Endothelial cell of umbilical vein (primary cell): ENCODE measurements at regions of chr2 and their contacts with region 1.

Region 1: DNA sequence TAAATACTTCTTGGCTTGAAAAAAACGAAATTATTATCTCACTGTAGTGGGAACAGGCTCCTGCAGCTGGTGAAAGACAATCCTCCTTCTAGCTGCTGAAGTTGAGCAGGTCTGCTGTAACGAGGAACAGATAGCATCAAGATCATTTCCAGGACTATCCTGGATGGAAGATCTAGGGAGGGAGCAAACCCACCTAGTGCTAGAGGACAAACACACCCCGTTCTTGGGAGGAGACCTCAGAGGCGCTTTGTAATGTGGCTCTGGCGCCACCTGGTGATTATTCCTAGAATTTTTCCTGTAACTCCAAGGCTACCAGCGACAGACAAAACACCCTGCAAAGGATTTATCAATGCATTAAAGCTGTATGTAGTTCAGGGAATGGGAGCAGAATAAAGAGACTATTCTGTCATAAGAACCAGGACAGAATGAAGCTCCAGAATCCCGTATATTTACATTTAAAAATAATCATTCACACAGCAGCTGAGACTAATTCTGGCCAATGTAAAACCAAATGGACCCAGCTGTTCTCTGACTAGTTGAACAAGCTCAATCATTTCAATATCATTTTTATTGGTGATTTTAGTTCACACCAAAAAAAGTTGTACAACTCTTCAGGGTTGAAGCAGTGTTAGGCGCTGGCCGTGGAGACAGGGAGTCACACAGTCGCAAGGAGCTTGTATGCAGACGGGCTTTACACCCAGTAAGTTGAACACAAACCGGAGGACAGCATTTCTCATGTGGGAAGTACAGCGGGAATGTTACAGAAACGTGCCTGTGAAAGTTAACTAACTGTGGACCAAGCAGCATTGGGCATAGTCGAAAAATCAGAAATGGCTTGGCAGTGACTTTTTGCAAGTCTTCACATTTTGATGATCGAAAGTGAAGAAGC is 290.3 kb downstream of the TRIB2 start:
- DNase-seq: peak; percentile 83
- H3K4me3 ChIP-seq: no peak overlapping the region
- H3K27ac ChIP-seq: no peak overlapping the region
- H3K4me1 ChIP-seq: peaks cover 19% of the 10 kb centered on the region
- H3K27me3 ChIP-seq: peaks cover 0 to 3% of the 10 kb centered on the region in 2 experiments
- CTCF ChIP-seq: peak; percentile 63 to 71
- POLR2A ChIP-seq: no peak

Region 2: GRCh38 chr2:11863513-11864328 is 1143.4 kb before region 1 on chr2:
- CTCF ChIA-PET with region 1: interaction called, 51 read pairs
- POLR2A ChIA-PET with region 1: interaction called, 4 read pairs
- dilution Hi-C with region 1: no loop called
- intact Hi-C with region 1: loop called (anchors 1 kb)
- DNase-seq: peak; percentile 88
- H3K4me3 ChIP-seq: no peak overlapping the region
- H3K27ac ChIP-seq: no peak overlapping the region
- H3K4me1 ChIP-seq: peaks cover 7% of the 10 kb centered on the region
- H3K27me3 ChIP-seq: peaks cover 3 to 11% of the 10 kb centered on the region in 2 experiments
- CTCF ChIP-seq: peak; percentile 80 to 93
- POLR2A ChIP-seq: no peak

Region 3: GRCh38 chr2:12416600-12416999 is 590.5 kb before region 1 on chr2:
- CTCF ChIA-PET with region 1: interaction called, 14 read pairs
- POLR2A ChIA-PET with region 1: no interaction called
- dilution Hi-C with region 1: no loop called
- intact Hi-C with region 1: loop called (anchors 1 kb)
- DNase-seq: peak; percentile 57
- H3K4me3 ChIP-seq: no peak overlapping the region
- H3K27ac ChIP-seq: no peak overlapping the region
- H3K4me1 ChIP-seq: peaks cover 3% of the 10 kb centered on the region
- H3K27me3 ChIP-seq: no peaks in the 10 kb centered on the region
- CTCF ChIP-seq: peak; percentile 47 to 62
- POLR2A ChIP-seq: no peak

Region 4: GRCh38 chr2:12665334-12665733 is 341.7 kb before region 1 on chr2:
- CTCF ChIA-PET with region 1: no interaction called
- POLR2A ChIA-PET with region 1: no interaction called
- dilution Hi-C with region 1: no loop called
- intact Hi-C with region 1: loop called (anchors 5 kb)
- DNase-seq: peak; percentile 94
- H3K4me3 ChIP-seq: no peak overlapping the region
- H3K27ac ChIP-seq: peak overlapping the region; percentile 86
- H3K4me1 ChIP-seq: peaks cover 24% of the 10 kb centered on the region
- H3K27me3 ChIP-seq: no peaks in the 10 kb centered on the region
- CTCF ChIP-seq: no peak
- POLR2A ChIP-seq: no peak

Region 5: GRCh38 chr2:12811916-12812315 is 195.2 kb before region 1 on chr2:
- CTCF ChIA-PET with region 1: no interaction called
- POLR2A ChIA-PET with region 1: no interaction called
- dilution Hi-C with region 1: no loop called
- intact Hi-C with region 1: no loop called
- DNase-seq: no peak
- H3K4me3 ChIP-seq: no peak overlapping the region
- H3K27ac ChIP-seq: no peak overlapping the region
- H3K4me1 ChIP-seq: peaks cover 18% of the 10 kb centered on the region
- H3K27me3 ChIP-seq: no peaks in the 10 kb centered on the region
- CTCF ChIP-seq: no peak
- POLR2A ChIP-seq: no peak

Region 6: DNA sequence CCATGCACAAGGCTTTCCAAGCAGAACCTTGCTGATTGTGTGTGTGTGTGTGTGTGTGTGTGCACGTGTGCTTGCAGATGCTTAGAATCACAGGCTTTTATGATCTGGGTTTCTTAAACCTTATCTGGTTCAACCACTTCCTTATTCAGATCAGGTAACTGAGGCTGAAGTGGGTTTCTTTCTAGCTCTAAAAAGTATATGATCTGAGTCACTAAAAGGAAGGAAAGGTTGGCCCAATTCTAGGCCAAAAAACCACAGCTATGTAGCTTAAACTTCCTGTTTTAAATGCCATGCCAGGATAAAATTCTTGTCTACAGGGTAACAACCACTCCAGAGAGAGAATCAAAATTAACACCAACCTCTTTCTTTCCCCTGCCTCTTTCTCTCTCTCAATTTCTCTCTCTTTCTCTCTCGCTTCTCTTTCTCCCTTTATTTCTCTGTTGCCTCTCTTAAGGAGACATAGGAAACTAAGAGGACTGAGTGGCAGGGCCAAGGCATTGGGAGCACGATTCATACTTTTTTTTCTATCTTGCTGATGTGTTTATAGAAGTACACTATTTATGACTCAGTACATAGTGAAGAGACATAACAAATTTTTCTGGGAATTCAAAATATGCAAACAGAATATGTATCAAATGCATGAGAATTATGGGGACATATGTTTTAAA is 150.0 kb before region 1 on chr2:
- CTCF ChIA-PET with region 1: interaction called, 6 read pairs
- POLR2A ChIA-PET with region 1: no interaction called
- dilution Hi-C with region 1: no loop called
- intact Hi-C with region 1: loop called (anchors 1 kb)
- DNase-seq: peak; percentile 81
- H3K4me3 ChIP-seq: peak overlapping the region in 1 of 3 experiments; percentile 23
- H3K27ac ChIP-seq: peak overlapping the region; percentile 91
- H3K4me1 ChIP-seq: peaks cover 27% of the 10 kb centered on the region
- H3K27me3 ChIP-seq: no peaks in the 10 kb centered on the region
- CTCF ChIP-seq: no peak
- POLR2A ChIP-seq: peak; percentile 38

Region 7: DNA sequence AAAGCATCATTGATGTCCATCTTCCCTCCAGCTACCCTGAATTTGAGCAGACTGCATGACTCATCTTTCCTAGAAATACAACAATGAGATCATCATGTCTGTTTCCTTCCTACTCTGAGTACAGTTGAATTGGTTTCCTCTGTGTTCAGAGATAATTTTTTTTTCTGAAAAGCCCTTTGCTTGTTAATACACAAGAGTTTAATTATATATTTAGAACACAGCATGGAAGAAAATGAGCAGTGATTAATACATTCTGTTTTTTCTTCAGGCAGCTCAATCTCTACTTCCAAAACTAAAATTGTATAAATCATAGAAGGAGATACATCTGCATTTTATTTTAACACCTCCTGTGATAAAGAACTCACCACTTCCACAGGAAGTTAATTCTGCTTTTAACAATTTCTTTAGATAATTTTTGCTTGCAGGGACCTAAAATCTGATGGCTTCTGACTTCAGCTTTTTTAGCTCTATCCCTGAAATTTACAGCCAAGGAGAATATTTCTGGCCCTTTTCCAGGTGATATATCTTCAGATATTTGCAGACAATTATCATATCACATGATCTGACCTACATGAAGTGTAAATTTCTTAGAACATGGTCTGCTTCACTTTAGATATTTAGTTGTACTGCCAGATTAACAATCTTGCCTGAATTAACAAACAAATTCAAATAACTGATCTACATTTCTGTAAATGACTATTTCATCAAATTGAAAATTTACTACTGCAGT is 41.4 kb before region 1 on chr2:
- CTCF ChIA-PET with region 1: interaction called, 10 read pairs
- POLR2A ChIA-PET with region 1: no interaction called
- dilution Hi-C with region 1: no loop called
- intact Hi-C with region 1: no loop called
- DNase-seq: peak; percentile 84
- H3K4me3 ChIP-seq: peak overlapping the region in 1 of 3 experiments; percentile 30
- H3K27ac ChIP-seq: peak overlapping the region; percentile 67
- H3K4me1 ChIP-seq: peaks cover 17% of the 10 kb centered on the region
- H3K27me3 ChIP-seq: no peaks in the 10 kb centered on the region
- CTCF ChIP-seq: no peak
- POLR2A ChIP-seq: peak; percentile 43